ENCODE measurements at regions of chr16 and their contacts with region 1.

Region 1: DNA sequence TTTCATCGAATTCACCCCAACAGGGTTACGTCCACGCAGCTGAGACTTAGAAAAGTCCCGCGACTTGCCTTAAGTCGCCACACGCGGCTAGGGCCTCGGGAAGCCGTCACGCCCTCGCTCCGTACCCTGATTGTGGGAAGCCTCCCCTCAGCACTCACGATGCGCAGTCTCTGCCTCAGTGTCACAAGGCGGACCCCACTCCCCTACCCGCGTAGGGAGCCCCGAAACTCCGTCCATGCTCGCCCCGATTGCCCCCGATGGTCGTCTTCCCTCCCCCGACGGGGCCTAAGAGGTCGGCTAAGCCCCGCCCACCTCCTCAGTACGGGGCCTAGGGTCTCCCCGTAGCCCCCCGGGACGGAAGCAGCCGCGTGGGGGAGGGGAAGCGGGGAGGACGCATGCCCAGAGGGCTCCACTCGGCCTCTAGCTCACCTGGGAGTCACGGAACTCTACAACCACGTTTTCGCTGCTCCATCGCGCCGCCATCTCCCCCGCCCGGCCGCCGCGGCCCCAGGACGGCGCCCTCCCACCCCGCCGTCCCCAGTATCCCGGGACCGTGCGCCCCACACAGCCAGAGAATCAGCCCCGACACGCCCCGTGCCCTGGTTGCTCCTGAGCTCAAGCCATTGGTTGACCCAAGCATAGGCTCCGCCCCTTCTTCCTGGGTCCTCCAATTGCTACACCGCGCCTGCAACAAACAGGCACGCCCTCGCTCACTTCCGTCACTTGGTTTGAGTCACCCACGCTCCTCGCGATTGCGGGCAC is at the start of gene WDR59:
- DNase-seq: peak; percentile 100
- H3K4me3 Mint-ChIP-seq: peak within 1 kb of the TSS; percentile 82
- H3K27ac Mint-ChIP-seq: peak within 1 kb of the TSS; percentile 89
- H3K4me1 Mint-ChIP-seq: no peaks in the 10 kb centered on the region
- H3K27me3 Mint-ChIP-seq: no peaks in the 10 kb centered on the region
- CTCF ChIP-seq: no peak
- total RNA-seq, gene WDR59: 53.8 and 56.1 TPM in 2 replicates

Region 2: DNA sequence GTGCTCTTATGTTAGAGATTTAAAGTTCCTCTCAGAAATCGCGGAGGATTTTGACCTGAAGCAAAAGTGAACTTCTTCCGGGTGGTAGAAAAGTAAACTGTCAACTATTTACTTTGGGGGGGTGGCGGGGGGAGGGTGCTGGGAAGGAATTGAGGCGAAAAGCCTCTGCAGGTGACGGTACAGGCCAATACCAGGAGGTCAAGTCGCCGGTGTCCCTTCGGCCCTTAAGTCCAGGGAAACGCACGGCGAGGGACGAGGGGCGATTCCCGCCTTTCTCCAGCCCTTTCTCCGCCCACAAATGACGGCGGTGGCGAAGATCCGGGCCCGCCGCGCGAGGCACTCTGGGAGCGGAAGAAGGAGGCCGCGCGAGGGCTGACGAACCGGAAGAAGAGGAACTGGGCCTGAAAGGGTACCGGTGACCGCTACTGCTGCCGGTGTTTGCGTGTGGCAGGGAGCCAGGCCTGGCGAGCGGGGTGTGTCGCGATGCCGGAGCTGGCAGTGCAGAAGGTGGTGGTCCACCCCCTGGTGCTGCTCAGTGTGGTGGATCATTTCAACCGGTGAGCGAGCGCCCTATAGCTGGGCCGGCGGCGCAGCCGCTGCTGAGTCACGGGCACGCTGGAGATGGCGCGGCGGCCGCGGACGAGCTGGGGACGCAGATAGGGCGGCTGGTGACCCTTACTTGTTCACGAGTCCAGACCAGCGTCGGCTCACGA is 688.1 kb before region 1 on chr16 and contains the start of gene PSMD7:
- CTCF ChIA-PET with region 1: no interaction called
- POLR2A ChIA-PET with region 1: no interaction called
- intact Hi-C with region 1: no loop called
- DNase-seq: peak; percentile 92
- H3K4me3 Mint-ChIP-seq: peak within 1 kb of the TSS; percentile 84
- H3K27ac Mint-ChIP-seq: peak within 1 kb of the TSS; percentile 98
- H3K4me1 Mint-ChIP-seq: peaks cover 7% of the 10 kb centered on the region
- H3K27me3 Mint-ChIP-seq: no peaks in the 10 kb centered on the region
- CTCF ChIP-seq: no peak
- total RNA-seq, gene PSMD7: 141 and 172 TPM in 2 replicates

Region 3: GRCh38 chr16:74813109-74813641 is 171.5 kb before region 1 on chr16:
- CTCF ChIA-PET with region 1: no interaction called
- POLR2A ChIA-PET with region 1: no interaction called
- intact Hi-C with region 1: no loop called
- DNase-seq: peak; percentile 73
- H3K4me3 Mint-ChIP-seq: no peak overlapping the region
- H3K27ac Mint-ChIP-seq: no peak overlapping the region
- H3K4me1 Mint-ChIP-seq: peaks cover 15% of the 10 kb centered on the region
- H3K27me3 Mint-ChIP-seq: no peaks in the 10 kb centered on the region
- CTCF ChIP-seq: peak; percentile 90

Region 4: DNA sequence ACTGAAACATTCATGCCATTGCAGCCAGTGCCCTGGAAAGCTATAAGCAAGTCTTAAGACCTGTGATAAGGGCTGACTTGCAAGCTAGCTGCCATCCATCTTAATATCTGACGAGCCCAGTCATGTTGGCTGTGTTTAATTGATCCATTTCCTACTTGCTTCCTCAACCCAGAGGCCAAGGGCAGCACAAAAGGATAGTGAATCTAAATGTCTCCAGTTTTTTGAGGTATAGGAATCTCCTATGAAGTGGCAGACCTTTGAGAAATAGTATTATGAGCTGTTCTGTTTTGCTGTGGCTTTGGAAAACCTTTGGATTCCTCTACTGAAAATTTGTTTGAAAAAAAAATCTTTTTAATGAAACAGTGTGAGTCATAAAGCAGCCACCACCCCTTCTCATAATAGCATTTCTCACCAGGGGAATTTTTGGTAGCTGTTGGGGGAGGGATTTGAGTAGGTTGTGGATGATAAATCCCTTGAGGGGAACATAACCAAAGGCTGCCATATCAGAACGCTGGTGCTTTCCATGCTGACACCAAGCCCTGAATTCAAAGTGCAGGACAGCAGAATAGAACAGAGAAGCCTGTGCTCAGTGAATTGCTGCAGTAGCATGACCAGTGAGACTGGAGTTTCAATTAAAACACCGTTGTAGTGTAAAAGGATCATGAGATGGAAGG is 27.1 kb after region 1 on chr16:
- CTCF ChIA-PET with region 1: interaction called, 4 read pairs
- POLR2A ChIA-PET with region 1: interaction called, 13 read pairs
- intact Hi-C with region 1: no loop called
- DNase-seq: peak; percentile 92
- H3K4me3 Mint-ChIP-seq: peak overlapping the region; percentile 37
- H3K27ac Mint-ChIP-seq: peak overlapping the region; percentile 81
- H3K4me1 Mint-ChIP-seq: peaks cover 17% of the 10 kb centered on the region
- H3K27me3 Mint-ChIP-seq: no peaks in the 10 kb centered on the region
- CTCF ChIP-seq: no peak